Caco-2 (cell line): ENCODE measurements at regions of chr3 and their contacts with region 1.

Region 1: GRCh38 chr3:145776782-145777408 is 384.1 kb downstream of the PLOD2 start:
- DNase-seq: peak in 1 of 2 experiments; percentile 66
- H3K4me3 ChIP-seq: no peak overlapping the region
- H3K4me3 Mint-ChIP-seq: no peak overlapping the region
- H3K27ac Mint-ChIP-seq: no peak overlapping the region
- H3K4me1 ChIP-seq: no peaks in the 10 kb centered on the region
- H3K4me1 Mint-ChIP-seq: peaks cover 2% of the 10 kb centered on the region
- H3K27me3 ChIP-seq: no peaks in the 10 kb centered on the region
- H3K27me3 Mint-ChIP-seq: peaks cover 8% of the 10 kb centered on the region
- CTCF ChIP-seq: peak; percentile 54 to 68

Region 2: DNA sequence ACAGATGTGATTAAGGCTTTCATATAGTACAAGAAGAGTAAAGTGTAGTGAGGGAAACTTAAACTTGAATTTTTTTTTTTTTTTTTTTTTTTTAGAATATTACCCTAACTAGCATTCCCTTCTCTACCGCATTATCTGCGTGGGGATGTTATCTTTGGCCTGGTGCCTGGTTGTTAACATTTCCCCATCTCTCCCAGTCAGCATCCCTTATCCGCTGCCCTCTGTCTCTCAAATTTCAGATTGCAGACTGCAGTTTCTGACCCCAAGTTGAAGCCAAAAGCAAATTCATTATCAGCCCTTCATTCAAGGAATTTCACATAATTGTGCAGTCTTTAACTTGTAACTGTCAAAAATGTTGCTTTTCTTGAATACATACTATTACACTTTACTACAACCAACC is 31.1 kb after region 1 on chr3:
- CTCF ChIA-PET with region 1: interaction called, 3 read pairs
- POLR2A ChIA-PET with region 1: no interaction called
- intact Hi-C with region 1: loop called (anchors 1 kb)
- DNase-seq: peak in 1 of 2 experiments; percentile 18
- H3K4me3 ChIP-seq: no peak overlapping the region
- H3K4me3 Mint-ChIP-seq: no peak overlapping the region
- H3K27ac Mint-ChIP-seq: no peak overlapping the region
- H3K4me1 ChIP-seq: no peaks in the 10 kb centered on the region
- H3K4me1 Mint-ChIP-seq: no peaks in the 10 kb centered on the region
- H3K27me3 ChIP-seq: no peaks in the 10 kb centered on the region
- H3K27me3 Mint-ChIP-seq: peaks cover 2% of the 10 kb centered on the region
- CTCF ChIP-seq: peak in 1 of 2 experiments; percentile 55

Region 3: DNA sequence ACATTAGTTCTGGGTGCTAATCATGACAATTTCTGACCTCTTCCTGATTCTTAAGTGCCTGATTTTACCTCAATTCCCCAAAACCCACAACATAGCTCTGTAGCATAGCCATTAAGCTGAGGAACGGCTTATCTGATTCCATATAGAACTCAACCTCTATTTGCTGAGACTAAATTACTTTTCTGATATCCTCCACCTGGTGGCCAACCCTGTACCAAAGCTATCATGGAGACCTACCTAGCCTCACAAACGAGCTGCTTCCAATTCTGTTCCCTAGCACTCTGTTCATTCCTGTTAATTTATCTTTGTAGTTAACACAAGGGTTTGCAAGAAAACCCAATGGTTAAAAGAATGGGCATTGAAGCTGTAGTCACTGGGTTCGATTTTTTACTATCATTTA is 138.9 kb after region 1 on chr3:
- CTCF ChIA-PET with region 1: interaction called, 4 read pairs
- POLR2A ChIA-PET with region 1: no interaction called
- intact Hi-C with region 1: loop called (anchors 1 kb)
- DNase-seq: no peak
- H3K4me3 ChIP-seq: no peak overlapping the region
- H3K4me3 Mint-ChIP-seq: no peak overlapping the region
- H3K27ac Mint-ChIP-seq: no peak overlapping the region
- H3K4me1 ChIP-seq: no peaks in the 10 kb centered on the region
- H3K4me1 Mint-ChIP-seq: no peaks in the 10 kb centered on the region
- H3K27me3 ChIP-seq: no peaks in the 10 kb centered on the region
- H3K27me3 Mint-ChIP-seq: no peaks in the 10 kb centered on the region
- CTCF ChIP-seq: peak in 1 of 2 experiments; percentile 19

Region 4: DNA sequence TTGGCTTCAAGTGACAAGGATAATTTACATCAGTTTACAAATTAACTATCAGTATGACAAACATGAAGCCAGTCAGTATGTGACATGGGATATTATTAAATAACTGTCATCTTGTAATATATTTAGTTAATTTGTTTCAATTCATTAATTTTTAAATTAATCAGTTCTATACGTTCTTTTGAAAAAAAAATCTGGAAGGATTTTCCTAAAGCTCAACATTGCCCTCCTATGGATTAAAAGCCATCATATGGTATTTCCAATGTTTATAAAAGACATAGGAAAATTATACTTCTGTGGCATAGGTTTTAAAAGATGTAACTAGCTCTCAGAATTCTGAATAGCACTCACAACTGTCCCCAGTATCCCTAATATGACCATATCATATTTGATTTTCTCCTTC is 249.7 kb after region 1 on chr3:
- CTCF ChIA-PET with region 1: interaction called, 4 read pairs
- POLR2A ChIA-PET with region 1: no interaction called
- intact Hi-C with region 1: loop called (anchors 1 kb)
- DNase-seq: no peak
- H3K4me3 ChIP-seq: no peak overlapping the region
- H3K4me3 Mint-ChIP-seq: no peak overlapping the region
- H3K27ac Mint-ChIP-seq: no peak overlapping the region
- H3K4me1 ChIP-seq: no peaks in the 10 kb centered on the region
- H3K4me1 Mint-ChIP-seq: no peaks in the 10 kb centered on the region
- H3K27me3 ChIP-seq: no peaks in the 10 kb centered on the region
- H3K27me3 Mint-ChIP-seq: peaks cover 3% of the 10 kb centered on the region
- CTCF ChIP-seq: no peak

Region 5: GRCh38 chr3:146374146-146374545 is 597.3 kb after region 1 on chr3:
- CTCF ChIA-PET with region 1: no interaction called
- POLR2A ChIA-PET with region 1: no interaction called
- intact Hi-C with region 1: no loop called
- DNase-seq: no peak
- H3K4me3 ChIP-seq: no peak overlapping the region
- H3K4me3 Mint-ChIP-seq: no peak overlapping the region
- H3K27ac Mint-ChIP-seq: no peak overlapping the region
- H3K4me1 ChIP-seq: no peaks in the 10 kb centered on the region
- H3K4me1 Mint-ChIP-seq: no peaks in the 10 kb centered on the region
- H3K27me3 ChIP-seq: no peaks in the 10 kb centered on the region
- H3K27me3 Mint-ChIP-seq: no peaks in the 10 kb centered on the region
- CTCF ChIP-seq: no peak